Caco-2 (cell line): ENCODE measurements at regions of chr4 and their contacts with region 1.

Region 1: DNA sequence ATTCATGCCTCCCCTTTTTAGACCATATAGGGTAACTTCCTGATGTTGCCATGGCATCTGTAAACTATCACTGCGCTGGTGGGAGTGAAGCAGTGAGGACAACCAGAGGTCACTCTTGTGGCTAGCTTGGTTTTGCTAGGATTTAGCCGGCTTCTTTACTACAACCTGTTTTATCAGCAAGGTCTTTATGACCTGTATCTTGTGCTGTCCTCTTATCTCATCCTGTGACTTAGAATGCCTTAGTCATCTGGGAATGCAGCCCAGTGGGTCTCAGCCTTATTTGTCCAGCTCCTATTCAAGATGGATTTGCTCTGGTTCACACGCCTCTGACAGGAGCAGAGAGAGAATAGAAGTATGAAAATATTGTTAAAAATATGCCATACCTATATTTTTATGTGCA is 355.7 kb downstream of the ADGRL3 start:
- DNase-seq: peak; percentile 85 to 91
- H3K4me3 ChIP-seq: no peak overlapping the region
- H3K4me3 Mint-ChIP-seq: peak overlapping the region; percentile 61
- H3K27ac Mint-ChIP-seq: peak overlapping the region; percentile 98
- H3K4me1 ChIP-seq: peaks cover 57% of the 10 kb centered on the region
- H3K4me1 Mint-ChIP-seq: peaks cover 41% of the 10 kb centered on the region
- H3K27me3 ChIP-seq: no peaks in the 10 kb centered on the region
- H3K27me3 Mint-ChIP-seq: no peaks in the 10 kb centered on the region
- CTCF ChIP-seq: no peak

Region 2: DNA sequence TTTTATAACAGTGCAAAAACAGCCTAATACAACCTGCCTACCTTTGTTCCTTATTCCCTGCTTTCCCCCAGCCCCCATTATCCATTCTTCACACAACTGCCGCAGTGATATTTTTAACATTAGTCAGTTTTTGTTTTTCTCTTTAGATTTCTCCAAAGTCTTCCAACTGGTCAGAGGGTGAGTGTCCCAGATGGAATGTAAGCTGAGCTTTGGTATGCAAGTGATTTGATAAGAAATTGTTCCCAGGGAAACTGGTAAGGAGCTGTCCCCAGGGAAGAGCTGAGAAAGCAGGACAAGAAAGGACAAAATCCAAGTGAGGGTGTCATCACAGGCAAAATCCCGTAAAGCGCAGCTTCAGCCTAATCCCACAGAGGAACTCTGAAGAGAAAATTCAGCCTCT is 831.2 kb before region 1 on chr4:
- CTCF ChIA-PET with region 1: no interaction called
- POLR2A ChIA-PET with region 1: no interaction called
- intact Hi-C with region 1: loop called (anchors 5 kb)
- DNase-seq: peak; percentile 54 to 68
- H3K4me3 ChIP-seq: no peak overlapping the region
- H3K4me3 Mint-ChIP-seq: peak overlapping the region; percentile 60
- H3K27ac Mint-ChIP-seq: peak overlapping the region; percentile 93
- H3K4me1 ChIP-seq: peaks cover 59% of the 10 kb centered on the region
- H3K4me1 Mint-ChIP-seq: peaks cover 25% of the 10 kb centered on the region
- H3K27me3 ChIP-seq: no peaks in the 10 kb centered on the region
- H3K27me3 Mint-ChIP-seq: no peaks in the 10 kb centered on the region
- CTCF ChIP-seq: no peak

Region 3: GRCh38 chr4:61094854-61095598 is 460.8 kb before region 1 on chr4:
- CTCF ChIA-PET with region 1: no interaction called
- POLR2A ChIA-PET with region 1: no interaction called
- intact Hi-C with region 1: loop called (anchors 10 kb)
- DNase-seq: peak; percentile 35 to 62
- H3K4me3 ChIP-seq: no peak overlapping the region
- H3K4me3 Mint-ChIP-seq: no peak overlapping the region
- H3K27ac Mint-ChIP-seq: no peak overlapping the region
- H3K4me1 ChIP-seq: peaks cover 38% of the 10 kb centered on the region
- H3K4me1 Mint-ChIP-seq: peaks cover 19% of the 10 kb centered on the region
- H3K27me3 ChIP-seq: no peaks in the 10 kb centered on the region
- H3K27me3 Mint-ChIP-seq: no peaks in the 10 kb centered on the region
- CTCF ChIP-seq: no peak

Region 4: GRCh38 chr4:61374447-61374891 is 181.3 kb before region 1 on chr4:
- CTCF ChIA-PET with region 1: no interaction called
- POLR2A ChIA-PET with region 1: no interaction called
- intact Hi-C with region 1: loop called (anchors 2 kb)
- DNase-seq: no peak
- H3K4me3 ChIP-seq: no peak overlapping the region
- H3K4me3 Mint-ChIP-seq: peak overlapping the region; percentile 83
- H3K27ac Mint-ChIP-seq: no peak overlapping the region
- H3K4me1 ChIP-seq: peaks cover 8% of the 10 kb centered on the region; the same call in 1 of the 2 replicates
- H3K4me1 Mint-ChIP-seq: peaks cover 5% of the 10 kb centered on the region
- H3K27me3 ChIP-seq: no peaks in the 10 kb centered on the region
- H3K27me3 Mint-ChIP-seq: no peaks in the 10 kb centered on the region
- CTCF ChIP-seq: no peak

Region 5: DNA sequence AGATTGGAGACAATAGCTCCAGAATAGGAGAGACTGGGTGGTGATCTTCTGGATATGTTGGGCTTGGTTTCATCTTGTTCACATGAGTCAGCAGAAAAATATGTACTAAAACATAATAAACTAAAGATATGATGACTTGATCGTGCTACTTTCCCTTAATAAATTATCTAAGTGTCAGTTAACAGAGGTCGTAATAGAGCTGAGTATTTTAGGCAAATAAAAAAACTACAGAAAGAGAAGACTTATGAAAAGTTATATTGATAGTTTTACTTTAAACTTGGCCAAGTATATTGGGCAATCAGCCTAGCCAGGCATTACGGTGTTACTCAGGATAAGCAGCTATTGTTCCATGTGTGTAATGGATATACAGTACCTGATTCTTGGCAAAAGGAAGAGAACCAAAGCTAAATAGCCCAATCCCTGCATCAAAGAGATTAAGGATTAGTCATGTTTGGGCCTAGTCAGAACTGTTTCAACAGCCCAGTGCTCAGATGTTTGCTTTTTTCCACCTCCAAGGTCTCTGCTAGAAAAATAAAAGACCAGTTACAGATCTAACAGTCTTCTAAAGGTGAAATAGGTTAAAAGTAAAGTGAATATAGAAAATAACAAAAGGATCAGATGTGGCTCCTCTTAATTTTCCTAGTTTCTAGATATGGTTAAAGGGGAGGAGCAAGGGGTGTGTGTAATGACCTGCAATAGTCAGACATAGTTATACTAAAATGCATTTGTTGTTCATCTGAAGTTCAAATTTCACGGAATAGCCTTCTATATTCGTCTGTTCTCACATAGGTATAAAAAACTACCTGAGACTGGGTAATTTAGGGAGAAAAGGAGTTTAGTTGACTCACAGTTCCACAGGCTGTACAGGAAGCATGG is 93.1 kb before region 1 on chr4:
- CTCF ChIA-PET with region 1: no interaction called
- POLR2A ChIA-PET with region 1: no interaction called
- intact Hi-C with region 1: loop called (anchors 2 kb)
- DNase-seq: peak in 1 of 2 experiments; percentile 4
- H3K4me3 ChIP-seq: no peak overlapping the region
- H3K4me3 Mint-ChIP-seq: no peak overlapping the region
- H3K27ac Mint-ChIP-seq: peak overlapping the region; percentile 76
- H3K4me1 ChIP-seq: no peaks in the 10 kb centered on the region
- H3K4me1 Mint-ChIP-seq: peaks cover 16% of the 10 kb centered on the region
- H3K27me3 ChIP-seq: no peaks in the 10 kb centered on the region
- H3K27me3 Mint-ChIP-seq: no peaks in the 10 kb centered on the region
- CTCF ChIP-seq: no peak

Region 6: DNA sequence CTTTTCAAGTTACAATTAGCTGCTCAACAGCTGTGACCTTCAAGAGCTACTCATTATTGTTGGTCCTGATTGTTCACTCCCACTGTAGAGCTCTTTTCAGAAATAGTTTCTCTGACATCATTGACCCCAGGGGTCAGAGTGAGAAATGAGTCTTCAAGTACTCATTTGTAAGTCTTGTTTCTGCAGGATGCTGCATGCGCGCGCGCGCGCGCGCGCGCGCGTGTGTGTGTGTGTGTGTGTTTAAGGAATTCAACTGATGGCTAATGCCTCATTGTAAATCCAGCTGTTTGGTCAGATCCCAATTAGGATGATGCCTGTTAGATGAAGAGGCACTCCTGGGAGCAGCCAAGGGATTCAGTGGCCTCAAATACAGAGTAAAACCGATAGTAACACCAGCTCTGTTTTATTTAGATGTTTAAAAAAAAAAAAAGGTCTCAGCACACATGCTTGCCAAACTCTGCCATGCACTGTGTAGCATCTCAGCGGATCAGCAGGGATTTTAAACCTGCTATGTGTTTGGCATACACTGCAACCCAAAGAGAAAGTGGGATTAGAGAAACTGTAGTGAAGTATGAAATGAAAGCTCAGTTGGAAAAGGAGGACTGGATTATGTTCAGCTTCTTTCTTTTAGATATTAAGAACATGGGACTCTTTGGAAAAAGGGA is 23.3 kb before region 1 on chr4:
- CTCF ChIA-PET with region 1: no interaction called
- POLR2A ChIA-PET with region 1: no interaction called
- intact Hi-C with region 1: no loop called
- DNase-seq: no peak
- H3K4me3 ChIP-seq: no peak overlapping the region
- H3K4me3 Mint-ChIP-seq: no peak overlapping the region
- H3K27ac Mint-ChIP-seq: no peak overlapping the region
- H3K4me1 ChIP-seq: 0 out of 2 replicates have a peak, but pooled peaks cover 15% of the 10 kb centered on the region
- H3K4me1 Mint-ChIP-seq: peaks cover 9% of the 10 kb centered on the region
- H3K27me3 ChIP-seq: no peaks in the 10 kb centered on the region
- H3K27me3 Mint-ChIP-seq: no peaks in the 10 kb centered on the region
- CTCF ChIP-seq: no peak

Region 7: DNA sequence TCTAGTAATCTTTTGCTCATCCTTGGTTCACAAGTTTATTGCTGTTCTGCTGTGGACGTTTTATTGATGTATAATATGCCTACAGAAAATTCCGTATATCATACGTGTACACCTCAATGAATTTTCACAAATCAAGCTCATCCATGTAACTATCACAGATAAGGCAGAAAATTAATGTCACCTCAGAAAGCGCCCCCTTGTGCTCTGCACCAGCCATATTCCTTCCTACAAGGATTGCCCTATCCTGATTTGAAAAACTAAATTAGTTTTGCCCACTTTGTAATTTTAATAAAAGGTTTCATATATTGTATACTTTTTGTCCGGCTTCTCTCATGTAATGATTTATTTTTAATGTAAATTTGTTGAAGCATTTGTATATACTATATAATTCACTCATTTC is 35.1 kb after region 1 on chr4:
- CTCF ChIA-PET with region 1: no interaction called
- POLR2A ChIA-PET with region 1: no interaction called
- intact Hi-C with region 1: no loop called
- DNase-seq: no peak
- H3K4me3 ChIP-seq: no peak overlapping the region
- H3K4me3 Mint-ChIP-seq: no peak overlapping the region
- H3K27ac Mint-ChIP-seq: no peak overlapping the region
- H3K4me1 ChIP-seq: no peaks in the 10 kb centered on the region
- H3K4me1 Mint-ChIP-seq: no peaks in the 10 kb centered on the region
- H3K27me3 ChIP-seq: no peaks in the 10 kb centered on the region
- H3K27me3 Mint-ChIP-seq: no peaks in the 10 kb centered on the region
- CTCF ChIP-seq: peak; percentile 8 to 24